HCT116 (cell line): ENCODE measurements at regions of chr2 and their contacts with region 1.

Region 1: DNA sequence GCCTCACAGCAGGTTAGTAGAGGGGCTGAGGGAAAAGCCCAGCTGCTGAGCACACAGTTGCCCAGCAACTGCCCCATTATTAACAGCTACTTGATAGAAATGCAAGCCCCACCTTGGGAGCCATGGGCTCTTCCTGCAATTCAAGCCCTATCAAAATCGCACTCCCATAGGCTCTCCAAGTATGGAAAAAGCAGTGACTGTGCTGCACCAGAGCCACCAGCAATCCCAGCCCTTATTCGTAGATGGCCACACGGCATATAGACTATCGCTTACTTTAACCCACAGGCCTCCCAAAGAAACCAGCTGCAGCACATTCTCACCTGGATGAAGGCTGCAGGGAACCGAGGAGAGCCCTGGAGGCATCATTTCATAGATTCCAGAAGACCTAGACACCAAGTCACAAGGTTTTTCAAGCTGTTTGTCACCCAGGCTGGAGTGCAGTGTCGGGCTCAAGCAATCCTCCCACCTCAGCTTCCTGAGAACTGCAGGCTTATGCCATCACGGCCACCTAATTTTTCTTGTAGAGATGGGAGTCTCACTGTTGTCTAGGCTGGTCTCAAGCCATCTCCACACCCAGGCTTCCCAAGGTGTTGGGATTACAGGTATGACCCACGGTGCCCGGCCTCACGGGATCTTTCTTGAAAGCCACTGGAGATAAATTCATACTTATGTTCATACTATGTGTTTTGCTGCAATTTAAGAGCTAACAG is 11.3 kb downstream of the NCL start:
- DNase-seq: no peak
- ATAC-seq: peak; percentile 46
- H3K4me3 ChIP-seq: no peak overlapping the region
- H3K27ac ChIP-seq: peak overlapping the region; percentile 41
- H3K4me1 ChIP-seq: no peaks in the 10 kb centered on the region
- H3K27me3 ChIP-seq: no peaks in the 10 kb centered on the region
- CTCF ChIP-seq: no peak
- POLR2A ChIP-seq: no peak
- RAD21 ChIP-seq: no peak

Region 2: DNA sequence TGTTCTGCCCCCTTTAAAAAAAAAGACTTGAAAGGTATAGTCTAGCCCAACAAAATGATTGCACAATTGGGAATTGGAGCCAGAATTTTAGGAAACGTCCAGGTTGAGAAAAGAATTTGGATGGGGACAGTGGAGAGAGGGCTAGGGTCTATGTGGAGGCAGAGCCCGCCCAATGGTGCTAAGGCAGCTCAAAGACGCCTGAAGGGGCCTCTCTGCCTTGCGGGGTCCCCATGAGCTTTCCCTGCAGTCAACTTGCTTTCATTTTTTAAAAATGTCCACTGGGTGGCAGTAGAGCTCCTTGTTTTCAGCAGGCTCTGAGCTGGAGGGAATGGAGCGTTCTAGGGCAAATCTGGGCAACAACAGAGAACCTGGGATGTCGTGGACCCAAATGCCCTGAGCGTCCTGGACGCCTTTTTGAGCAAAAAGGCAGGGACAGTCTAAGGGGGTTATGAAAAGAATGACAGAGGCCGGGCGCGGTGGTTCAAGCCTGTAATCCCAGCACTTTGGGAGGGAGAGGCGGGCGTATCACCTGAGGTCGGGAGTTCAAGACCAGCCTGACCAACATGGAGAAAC is 628.5 kb before region 1 on chr2:
- CTCF ChIA-PET with region 1: interaction called, 15 read pairs
- POLR2A ChIA-PET with region 1: no interaction called
- RAD21 ChIA-PET with region 1: no interaction called
- intact Hi-C with region 1: loop called (anchors 1 kb)
- DNase-seq: peak; percentile 77
- ATAC-seq: peak; percentile 93
- H3K4me3 ChIP-seq: peak overlapping the region in 1 of 2 experiments; percentile 13; a peak in 1 of 4 replicates
- H3K27ac ChIP-seq: no peak overlapping the region
- H3K4me1 ChIP-seq: peaks cover 0 to 3% of the 10 kb centered on the region in 2 experiments; a peak in 1 of 4 replicates
- H3K27me3 ChIP-seq: no peaks in the 10 kb centered on the region
- CTCF ChIP-seq: peak; percentile 50 to 85 (median 71)
- POLR2A ChIP-seq: no peak
- RAD21 ChIP-seq: peak; percentile 93

Region 3: GRCh38 chr2:230902180-230902899 is 550.6 kb before region 1 on chr2:
- CTCF ChIA-PET with region 1: no interaction called
- POLR2A ChIA-PET with region 1: no interaction called
- RAD21 ChIA-PET with region 1: no interaction called
- intact Hi-C with region 1: loop called (anchors 2 kb)
- DNase-seq: peak; percentile 54
- ATAC-seq: peak; percentile 73
- H3K4me3 ChIP-seq: no peak overlapping the region
- H3K27ac ChIP-seq: no peak overlapping the region
- H3K4me1 ChIP-seq: peaks cover 15 to 22% of the 10 kb centered on the region in 2 experiments
- H3K27me3 ChIP-seq: peaks cover 33% of the 10 kb centered on the region; the same call in 1 of the 2 replicates
- CTCF ChIP-seq: peak; percentile 92 to 94 (median 92)
- POLR2A ChIP-seq: no peak
- RAD21 ChIP-seq: peak; percentile 95

Region 4: DNA sequence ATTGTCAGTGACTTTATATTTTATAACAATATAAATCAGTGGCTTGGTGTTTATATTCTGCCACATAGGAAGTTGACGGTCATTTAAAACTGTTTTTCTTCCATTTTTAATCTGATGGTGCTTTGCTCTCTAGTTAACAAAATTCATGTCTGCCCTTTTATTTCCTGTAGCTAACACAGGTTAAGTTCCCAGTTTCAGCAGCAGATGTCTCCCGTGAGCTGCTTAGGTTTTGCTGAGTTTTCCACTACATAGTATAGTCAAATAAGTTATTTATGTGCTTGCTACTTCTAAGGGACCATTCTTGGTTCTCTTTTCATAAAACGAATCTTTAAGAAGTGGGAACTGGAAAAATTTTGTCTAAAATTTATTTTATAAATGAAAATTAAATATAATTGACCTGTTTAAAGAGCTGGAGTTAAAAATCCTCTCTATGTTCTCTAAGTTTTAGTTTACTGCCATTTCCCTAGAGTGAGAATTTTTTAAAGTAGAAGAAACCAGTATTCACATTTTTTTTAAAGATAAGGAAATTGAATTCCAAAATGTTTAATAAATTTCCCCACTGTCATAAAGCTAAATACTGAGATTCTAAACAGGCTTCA is 348.7 kb before region 1 on chr2:
- CTCF ChIA-PET with region 1: interaction called, 37 read pairs
- POLR2A ChIA-PET with region 1: no interaction called
- RAD21 ChIA-PET with region 1: no interaction called
- intact Hi-C with region 1: loop called (anchors 1 kb)
- DNase-seq: peak; percentile 27
- ATAC-seq: peak; percentile 80
- H3K4me3 ChIP-seq: no peak overlapping the region
- H3K27ac ChIP-seq: no peak overlapping the region
- H3K4me1 ChIP-seq: peaks cover 7 to 17% of the 10 kb centered on the region in 2 experiments
- H3K27me3 ChIP-seq: no peaks in the 10 kb centered on the region
- CTCF ChIP-seq: peak; percentile 64 to 79 (median 71)
- POLR2A ChIP-seq: no peak
- RAD21 ChIP-seq: peak; percentile 76

Region 5: DNA sequence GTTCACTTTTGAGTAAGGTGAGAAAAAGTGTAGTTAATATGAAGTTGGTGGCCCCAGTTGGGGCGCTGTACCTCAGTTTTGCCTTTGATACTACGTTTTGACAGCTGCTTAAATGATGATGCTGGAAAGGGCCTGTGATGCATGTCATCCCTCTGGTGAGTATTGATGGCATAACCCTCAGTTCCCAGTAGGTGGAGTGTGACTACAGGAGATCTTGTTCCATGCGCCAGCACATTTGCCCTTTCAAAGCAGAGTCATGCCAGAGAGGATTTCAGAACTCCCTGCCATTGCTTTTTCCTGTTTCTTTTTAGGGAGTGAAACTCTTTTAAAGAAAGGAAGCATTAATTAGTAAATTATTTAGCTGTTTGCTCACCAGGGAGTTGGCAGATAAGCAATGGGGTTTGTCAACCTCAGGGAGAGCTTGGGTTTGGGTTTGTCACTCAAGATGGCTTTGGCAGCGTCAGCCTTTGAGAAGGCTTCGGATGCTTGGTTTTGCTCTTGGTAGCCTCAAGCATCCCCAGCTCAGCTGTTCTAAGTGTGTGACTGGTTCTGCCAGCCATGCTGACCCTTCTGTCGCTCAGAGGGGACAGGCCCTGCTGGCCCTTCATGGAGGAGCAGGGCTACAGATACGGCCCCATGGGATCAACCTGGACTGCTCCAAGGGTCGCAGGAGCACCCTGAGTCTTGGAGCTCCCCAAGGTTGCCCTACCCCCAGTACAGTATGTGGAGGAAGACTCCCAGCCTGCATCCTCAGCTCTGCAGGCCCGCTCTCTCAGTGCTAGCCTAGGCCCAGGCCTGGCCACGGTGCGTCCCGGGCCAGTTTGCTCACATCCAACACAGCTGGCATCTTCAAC is 225.4 kb before region 1 on chr2:
- CTCF ChIA-PET with region 1: interaction called, 17 read pairs
- POLR2A ChIA-PET with region 1: interaction called, 3 read pairs
- RAD21 ChIA-PET with region 1: no interaction called
- intact Hi-C with region 1: loop called (anchors 1 kb)
- DNase-seq: peak; percentile 56
- ATAC-seq: peak; percentile 99
- H3K4me3 ChIP-seq: no peak overlapping the region
- H3K27ac ChIP-seq: no peak overlapping the region
- H3K4me1 ChIP-seq: no peaks in the 10 kb centered on the region
- H3K27me3 ChIP-seq: no peaks in the 10 kb centered on the region
- CTCF ChIP-seq: peak; percentile 77 to 80 (median 80)
- POLR2A ChIP-seq: no peak
- RAD21 ChIP-seq: peak; percentile 92

Region 6: GRCh38 chr2:231297108-231297908 is 155.6 kb before region 1 on chr2:
- CTCF ChIA-PET with region 1: interaction called, 7 read pairs
- POLR2A ChIA-PET with region 1: no interaction called
- RAD21 ChIA-PET with region 1: no interaction called
- intact Hi-C with region 1: loop called (anchors 1 kb)
- DNase-seq: peak; percentile 10
- ATAC-seq: peak; percentile 99
- H3K4me3 ChIP-seq: no peak overlapping the region
- H3K27ac ChIP-seq: no peak overlapping the region
- H3K4me1 ChIP-seq: no peaks in the 10 kb centered on the region
- H3K27me3 ChIP-seq: no peaks in the 10 kb centered on the region
- CTCF ChIP-seq: peak; percentile 65 to 79 (median 70); a peak in 5 of 6 replicates
- POLR2A ChIP-seq: no peak
- RAD21 ChIP-seq: peak; percentile 68

Region 7: GRCh38 chr2:231463698-231464575 is 11.0 kb after region 1 on chr2 and contains the start of gene NCL:
- CTCF ChIA-PET with region 1: interaction called, 18 read pairs
- POLR2A ChIA-PET with region 1: interaction called, 67 read pairs
- RAD21 ChIA-PET with region 1: no interaction called
- intact Hi-C with region 1: no loop called
- DNase-seq: peak; percentile 54
- ATAC-seq: peak; percentile 92
- H3K4me3 ChIP-seq: peak within 1 kb of the TSS; percentile 79 to 93
- H3K27ac ChIP-seq: peak within 1 kb of the TSS; percentile 98
- H3K4me1 ChIP-seq: peaks cover 7 to 25% of the 10 kb centered on the region in 2 experiments
- H3K27me3 ChIP-seq: no peaks in the 10 kb centered on the region
- CTCF ChIP-seq: no peak
- POLR2A ChIP-seq: peak; percentile 97
- RAD21 ChIP-seq: no peak
- total RNA-seq, gene NCL: 1,077 TPM